ENCODE measurements at regions of chr2 and their contacts with region 1.

Region 1: GRCh38 chr2:24228470-24228869 is 53.6 kb downstream of the FAM228A start:
- DNase-seq: no peak
- H3K4me3 ChIP-seq: no peak overlapping the region
- H3K27ac ChIP-seq: no peak overlapping the region
- H3K4me1 ChIP-seq: no peaks in the 10 kb centered on the region
- H3K27me3 ChIP-seq: no peaks in the 10 kb centered on the region
- CTCF ChIP-seq: peak in 3 of 4 experiments; percentile 31 to 59 (median 41)
- POLR2A ChIP-seq: no peak

Region 2: GRCh38 chr2:24382363-24383073 is 154.0 kb after region 1 on chr2:
- intact Hi-C with region 1: loop called (anchors 5 kb)
- DNase-seq: peak; percentile 34
- H3K4me3 ChIP-seq: no peak overlapping the region
- H3K27ac ChIP-seq: no peak overlapping the region
- H3K4me1 ChIP-seq: no peaks in the 10 kb centered on the region
- H3K27me3 ChIP-seq: no peaks in the 10 kb centered on the region
- CTCF ChIP-seq: peak; percentile 46 to 70 (median 52)
- POLR2A ChIP-seq: no peak

Measured in prostate gland (tissue), 2 donors.